Adrenal gland (tissue), 19 donors: ENCODE measurements at regions of chr17 and their contacts with region 1.

Region 1: DNA sequence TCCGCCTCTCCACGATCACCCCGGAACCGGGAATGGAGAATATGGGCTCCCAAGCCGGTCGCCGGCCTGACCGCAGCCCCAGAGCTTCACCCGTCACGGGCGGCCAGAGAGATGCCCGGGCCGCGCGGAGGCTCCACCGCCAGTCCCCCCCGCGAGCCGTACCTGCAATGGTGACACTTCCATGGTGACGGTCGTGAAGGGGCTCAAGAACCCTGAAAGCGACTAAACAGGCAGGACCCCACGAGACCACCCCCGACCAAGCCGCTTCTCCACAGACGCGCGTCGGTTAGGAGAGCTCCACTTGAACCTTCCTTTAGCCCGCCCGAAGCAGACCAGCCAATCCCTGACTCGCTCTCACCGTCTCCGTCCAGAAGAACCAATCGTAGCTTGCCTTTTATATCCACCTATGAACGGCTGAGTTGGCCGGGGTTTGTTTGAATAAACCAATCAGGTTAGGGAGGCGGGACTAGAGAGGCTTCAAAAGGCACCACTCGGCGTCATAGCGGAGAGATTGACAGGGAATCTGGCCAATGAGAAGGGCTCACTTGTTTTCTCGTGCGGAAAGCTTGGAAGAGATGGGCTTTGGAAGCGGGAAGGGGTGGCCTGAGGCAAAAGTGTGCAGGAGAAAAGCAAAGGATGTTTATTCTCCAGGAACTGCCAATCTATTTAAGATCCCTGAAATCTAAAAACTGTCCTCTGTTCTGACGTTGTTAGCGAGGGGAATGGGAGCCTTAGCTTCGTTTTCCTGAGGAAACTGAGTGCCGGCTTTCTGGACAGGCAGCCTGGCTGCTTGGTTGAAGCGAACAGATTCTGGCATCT is at the start of gene TOP2A:
- DNase-seq: peak; percentile 97 to 100 (median 99)
- H3K4me3 ChIP-seq: peak within 1 kb of the TSS in 3 of 4 donors; percentile 10 to 53 (median 17)
- H3K27ac ChIP-seq: peak within 1 kb of the TSS in 2 of 5 donors; percentile 19 to 32
- H3K4me1 ChIP-seq: peaks cover 6 to 12% of the 10 kb centered on the region in 2 donors
- H3K27me3 ChIP-seq: no peaks in the 10 kb centered on the region
- CTCF ChIP-seq: no peak
- POLR2A ChIP-seq: no peak
- total RNA-seq, gene TOP2A: 1.9 to 51.1 (median 4.0) TPM

Region 2: DNA sequence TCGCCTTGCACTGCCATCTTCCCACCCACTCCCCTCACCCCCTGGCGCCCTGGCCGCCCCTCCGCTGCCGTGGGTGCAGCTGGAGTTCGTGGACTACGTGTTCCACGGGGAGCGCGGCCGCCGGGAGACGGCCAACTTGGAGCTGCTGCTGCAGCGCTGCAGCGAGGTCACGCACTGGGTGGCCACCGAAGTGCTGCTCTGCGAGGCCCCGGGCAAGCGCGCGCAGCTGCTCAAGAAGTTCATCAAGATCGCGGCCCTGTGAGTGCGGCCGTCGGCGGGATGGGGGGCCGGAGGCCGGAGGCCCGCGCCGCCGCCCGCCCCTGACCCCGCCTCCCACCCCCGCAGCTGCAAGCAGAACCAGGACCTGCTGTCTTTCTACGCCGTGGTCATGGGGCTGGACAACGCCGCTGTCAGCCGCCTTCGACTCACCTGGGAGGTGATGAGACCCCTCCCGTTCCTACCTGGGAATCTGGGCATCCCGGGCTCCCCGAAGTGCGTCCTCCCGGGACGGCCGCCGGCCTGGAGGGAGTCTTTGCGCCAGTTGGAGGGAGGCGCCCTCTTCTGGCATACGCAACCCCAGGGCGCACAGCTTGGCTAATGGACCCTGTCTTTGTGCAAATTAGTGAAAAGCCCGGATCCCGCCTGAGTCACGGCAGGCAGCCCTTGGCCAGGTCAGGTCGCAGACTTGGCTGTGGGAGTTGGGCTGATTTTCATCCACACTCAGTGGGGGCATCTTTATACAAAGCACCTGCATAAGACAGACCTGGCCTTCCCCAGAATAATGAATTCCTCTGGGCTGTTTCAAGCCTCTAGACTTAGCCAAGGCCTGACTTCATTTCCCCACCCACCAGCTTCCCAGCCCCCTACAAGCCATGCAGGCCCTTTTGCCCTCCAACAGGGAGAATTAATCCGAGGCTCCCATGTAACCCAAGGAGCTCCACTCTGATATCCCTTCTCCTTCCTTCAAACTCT is 226.3 kb before region 1 on chr17:
- intact Hi-C with region 1: loop called in 1 of 2 experiments (anchors 10 kb)
- DNase-seq: peak; percentile 81 to 92 (median 87)
- H3K4me3 ChIP-seq: peak overlapping the region in 2 of 4 donors; percentile 41 to 60
- H3K27ac ChIP-seq: peak overlapping the region in 4 of 5 donors; percentile 52 to 90 (median 71)
- H3K4me1 ChIP-seq: peaks cover 4 to 13% of the 10 kb centered on the region in 2 donors
- H3K27me3 ChIP-seq: no peaks in the 10 kb centered on the region
- CTCF ChIP-seq: peak; percentile 40 to 58 (median 56)
- POLR2A ChIP-seq: peak in 1 of 2 donors; percentile 59

Region 3: DNA sequence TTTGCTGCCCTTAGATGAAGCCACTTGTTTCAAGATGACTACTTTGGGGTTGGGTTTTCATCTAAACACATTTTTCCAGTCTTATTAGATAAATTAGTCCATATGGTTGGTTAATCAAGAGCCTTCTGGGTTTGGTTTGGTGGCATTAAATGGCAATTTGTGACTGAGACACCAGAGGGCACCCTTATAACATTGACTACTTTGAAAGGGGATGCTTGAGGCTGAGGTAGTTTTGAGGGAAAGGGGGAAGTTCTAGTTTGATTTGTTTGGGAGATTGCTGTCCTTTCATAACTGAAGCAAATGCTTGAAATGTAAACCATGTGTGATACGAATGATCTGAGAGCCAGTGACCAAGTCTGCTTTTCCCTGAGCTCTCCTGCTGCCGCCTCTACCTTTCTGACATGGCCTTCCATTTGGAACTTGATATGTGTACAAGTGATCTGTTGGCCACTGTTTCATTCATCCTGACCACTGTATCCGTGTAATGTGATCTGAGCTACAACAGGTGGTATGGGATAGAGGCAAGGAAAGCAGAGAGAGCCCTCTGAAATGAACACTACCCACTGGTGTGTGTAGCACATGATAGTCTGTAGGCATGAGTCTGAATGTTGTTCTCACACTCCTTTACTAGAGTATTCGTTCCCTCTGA is 114.7 kb before region 1 on chr17:
- intact Hi-C with region 1: loop called in 1 of 2 experiments (anchors 10 kb)
- DNase-seq: peak in 3 of 7 donors; percentile 67 to 81 (median 73)
- H3K4me3 ChIP-seq: no peak overlapping the region
- H3K27ac ChIP-seq: peak overlapping the region in 1 of 5 donors; percentile 18
- H3K4me1 ChIP-seq: peaks cover 0 to 24% of the 10 kb centered on the region in 2 donors
- H3K27me3 ChIP-seq: no peaks in the 10 kb centered on the region
- CTCF ChIP-seq: peak; percentile 50 to 94 (median 83)
- POLR2A ChIP-seq: no peak

Region 4: DNA sequence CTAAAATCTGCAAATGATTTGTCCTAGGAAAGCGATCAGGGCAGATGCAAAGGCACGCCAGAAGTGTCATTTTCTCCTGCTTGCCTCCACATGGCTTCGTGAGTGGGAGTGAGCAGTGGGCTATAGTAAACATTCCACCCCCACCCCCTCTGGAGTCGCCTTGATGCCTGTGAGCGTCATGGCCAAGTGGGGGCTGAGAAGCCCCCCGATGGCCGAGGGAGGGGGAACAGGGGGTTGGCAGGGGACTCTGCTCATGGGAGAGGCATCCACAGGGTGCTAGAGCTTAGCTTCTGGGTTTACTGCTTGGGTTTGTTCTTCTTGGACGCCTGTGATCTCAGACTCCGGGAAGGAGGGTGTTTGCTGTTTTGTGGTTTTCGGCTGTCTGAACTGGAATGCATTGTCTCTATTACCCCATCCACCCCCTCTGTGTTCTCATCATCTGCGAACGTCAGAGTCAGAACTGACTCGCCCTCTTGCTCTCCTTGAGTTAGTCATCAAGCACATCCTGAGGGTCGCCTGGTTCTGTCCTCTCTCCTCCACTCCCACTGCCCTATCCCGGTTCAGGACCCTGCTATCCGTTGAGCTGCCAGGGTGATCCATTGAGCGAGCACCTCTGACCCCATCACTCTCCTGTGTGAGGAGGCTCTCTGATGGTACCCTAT is 68.2 kb after region 1 on chr17:
- intact Hi-C with region 1: no loop called
- DNase-seq: peak in 4 of 7 donors; percentile 46 to 75 (median 50)
- H3K4me3 ChIP-seq: no peak overlapping the region
- H3K27ac ChIP-seq: peak overlapping the region in 3 of 5 donors; percentile 11 to 85 (median 62)
- H3K4me1 ChIP-seq: no peaks in the 10 kb centered on the region
- H3K27me3 ChIP-seq: no peaks in the 10 kb centered on the region
- CTCF ChIP-seq: no peak
- POLR2A ChIP-seq: no peak

Region 5: GRCh38 chr17:40582328-40582901 is 164.6 kb after region 1 on chr17:
- intact Hi-C with region 1: no loop called
- DNase-seq: peak; percentile 31 to 80 (median 50)
- H3K4me3 ChIP-seq: no peak overlapping the region
- H3K27ac ChIP-seq: peak overlapping the region in 1 of 5 donors; percentile 63
- H3K4me1 ChIP-seq: no peaks in the 10 kb centered on the region
- H3K27me3 ChIP-seq: no peaks in the 10 kb centered on the region
- CTCF ChIP-seq: no peak
- POLR2A ChIP-seq: no peak